A673 (cell line): ENCODE measurements at regions of chr17 and their contacts with region 1.

Region 1: GRCh38 chr17:63741221-63742049 is at the start of gene STRADA:
- DNase-seq: peak; percentile 99
- H3K4me3 ChIP-seq: peak within 1 kb of the TSS; percentile 91
- H3K27ac ChIP-seq: peak within 1 kb of the TSS; percentile 93
- H3K4me1 ChIP-seq: peaks cover 4% of the 10 kb centered on the region
- H3K27me3 ChIP-seq: no peaks in the 10 kb centered on the region
- CTCF ChIP-seq: no peak
- total RNA-seq, gene STRADA: 56.3 and 62.8 TPM in 2 replicates

Region 2: GRCh38 chr17:63722403-63722802 is 19.0 kb before region 1 on chr17:
- CTCF ChIA-PET with region 1: no interaction called
- POLR2A ChIA-PET with region 1: no interaction called
- intact Hi-C with region 1: no loop called
- DNase-seq: no peak
- H3K4me3 ChIP-seq: no peak overlapping the region
- H3K27ac ChIP-seq: no peak overlapping the region
- H3K4me1 ChIP-seq: no peaks in the 10 kb centered on the region
- H3K27me3 ChIP-seq: no peaks in the 10 kb centered on the region
- CTCF ChIP-seq: no peak

Region 3: GRCh38 chr17:63773381-63774140 is 32.1 kb after region 1 on chr17 and contains the start of gene CCDC47:
- CTCF ChIA-PET with region 1: no interaction called
- POLR2A ChIA-PET with region 1: interaction called, 15 read pairs
- intact Hi-C with region 1: no loop called
- DNase-seq: peak; percentile 100
- H3K4me3 ChIP-seq: peak within 1 kb of the TSS; percentile 70
- H3K27ac ChIP-seq: peak within 1 kb of the TSS; percentile 99
- H3K4me1 ChIP-seq: peaks cover 10% of the 10 kb centered on the region
- H3K27me3 ChIP-seq: no peaks in the 10 kb centered on the region
- CTCF ChIP-seq: no peak
- total RNA-seq, gene CCDC47: 91.9 and 104 TPM in 2 replicates